HCT116 (cell line): ENCODE measurements at regions of chr19 and their contacts with region 1.

Region 1: GRCh38 chr19:40305403-40305802 is 20.3 kb upstream of the AKT2 start:
- DNase-seq: peak; percentile 77
- ATAC-seq: peak; percentile 84
- H3K4me3 ChIP-seq: no peak overlapping the region
- H3K27ac ChIP-seq: no peak overlapping the region
- H3K4me1 ChIP-seq: no peaks in the 10 kb centered on the region
- H3K27me3 ChIP-seq: no peaks in the 10 kb centered on the region
- CTCF ChIP-seq: peak; percentile 66 to 94 (median 82)
- POLR2A ChIP-seq: no peak
- RAD21 ChIP-seq: peak; percentile 93

Region 2: DNA sequence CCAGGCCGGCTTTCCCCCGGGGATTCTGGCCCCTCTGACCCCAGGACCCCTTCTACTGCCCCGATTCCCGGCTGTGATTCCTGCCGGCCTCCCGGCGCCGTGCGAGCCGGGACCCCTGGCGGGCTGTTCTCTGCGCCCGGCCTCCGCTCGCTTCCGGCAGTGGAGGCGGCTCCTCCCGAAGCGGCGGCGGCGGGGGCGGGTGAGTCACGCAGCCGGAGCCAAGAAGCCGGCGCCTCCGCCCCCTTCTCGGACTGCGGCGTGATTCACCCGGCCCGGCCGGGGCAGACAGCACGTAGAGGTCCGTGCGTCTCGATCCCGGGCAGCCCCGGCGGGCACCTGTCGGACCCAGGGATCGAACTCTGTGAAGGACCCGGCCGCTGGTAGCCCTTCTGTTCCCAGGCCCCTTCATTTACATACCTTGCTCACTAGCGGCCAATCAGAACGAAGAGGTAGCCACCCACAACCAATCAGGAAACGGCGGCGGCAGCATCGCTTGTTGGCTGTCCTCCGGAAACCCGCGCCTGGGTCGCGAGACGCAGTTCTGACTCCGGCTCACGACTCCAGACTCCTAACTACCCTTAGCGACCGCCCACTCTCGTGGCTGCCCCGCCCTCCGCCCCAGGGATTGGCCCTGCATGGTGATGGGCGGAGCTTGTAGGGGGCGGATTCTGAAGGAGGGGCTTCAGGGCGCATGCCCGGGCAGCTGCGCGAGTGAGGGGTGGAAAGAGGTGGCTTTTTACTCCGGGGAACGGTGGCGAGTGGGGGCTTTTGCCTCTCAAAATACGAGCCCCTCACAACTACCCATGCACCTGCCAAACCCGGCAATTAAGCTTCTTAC is 120.3 kb after region 1 on chr19 and contains the start of gene SERTAD1:
- CTCF ChIA-PET with region 1: interaction called, 12 read pairs
- POLR2A ChIA-PET with region 1: no interaction called
- RAD21 ChIA-PET with region 1: interaction called in 1 of 2 experiments, 3 read pairs
- intact Hi-C with region 1: no loop called
- DNase-seq: peak; percentile 98
- ATAC-seq: peak; percentile 79
- H3K4me3 ChIP-seq: peak within 1 kb of the TSS; percentile 65 to 84
- H3K27ac ChIP-seq: peak within 1 kb of the TSS; percentile 98
- H3K4me1 ChIP-seq: peaks cover 27 to 57% of the 10 kb centered on the region in 2 experiments
- H3K27me3 ChIP-seq: no peaks in the 10 kb centered on the region
- CTCF ChIP-seq: peak; percentile 23 to 82 (median 75); a peak in 5 of 6 replicates
- POLR2A ChIP-seq: peak; percentile 97
- RAD21 ChIP-seq: peak; percentile 36
- total RNA-seq, gene SERTAD1: 30.3 TPM

Region 3: GRCh38 chr19:40529093-40529954 is 223.9 kb after region 1 on chr19:
- CTCF ChIA-PET with region 1: interaction called, 4 read pairs
- POLR2A ChIA-PET with region 1: no interaction called
- RAD21 ChIA-PET with region 1: no interaction called
- intact Hi-C with region 1: loop called (anchors 10 kb)
- DNase-seq: peak; percentile 78
- ATAC-seq: peak; percentile 76
- H3K4me3 ChIP-seq: peak overlapping the region; percentile 27 to 30
- H3K27ac ChIP-seq: peak overlapping the region; percentile 54
- H3K4me1 ChIP-seq: peaks cover 22 to 29% of the 10 kb centered on the region in 2 experiments
- H3K27me3 ChIP-seq: no peaks in the 10 kb centered on the region
- CTCF ChIP-seq: peak; percentile 81 to 91 (median 86)
- POLR2A ChIP-seq: no peak
- RAD21 ChIP-seq: peak; percentile 51

Region 4: GRCh38 chr19:40633207-40633606 is 327.8 kb after region 1 on chr19:
- CTCF ChIA-PET with region 1: interaction called, 16 read pairs
- POLR2A ChIA-PET with region 1: no interaction called
- RAD21 ChIA-PET with region 1: interaction called in 1 of 2 experiments, 4 read pairs
- intact Hi-C with region 1: loop called (anchors 1 kb)
- DNase-seq: no peak
- ATAC-seq: no peak
- H3K4me3 ChIP-seq: no peak overlapping the region
- H3K27ac ChIP-seq: no peak overlapping the region
- H3K4me1 ChIP-seq: peaks cover 2 to 26% of the 10 kb centered on the region in 2 experiments; a peak in 2 of 4 replicates
- H3K27me3 ChIP-seq: no peaks in the 10 kb centered on the region
- CTCF ChIP-seq: no peak
- POLR2A ChIP-seq: no peak
- RAD21 ChIP-seq: no peak